ENCODE measurements at regions of chr3 and their contacts with region 1.

Region 1: GRCh38 chr3:120780977-120781376 is 38.4 kb downstream of the GTF2E1 start:
- DNase-seq: peak; percentile 40
- CTCF ChIP-seq: no peak

Region 2: GRCh38 chr3:120763601-120764000 is 17.4 kb before region 1 on chr3:
- CTCF ChIA-PET with region 1: interaction called, 15 read pairs
- POLR2A ChIA-PET with region 1: no interaction called
- DNase-seq: peak; percentile 22
- CTCF ChIP-seq: no peak

Region 3: GRCh38 chr3:121096662-121097352 is 315.8 kb after region 1 on chr3:
- CTCF ChIA-PET with region 1: no interaction called
- POLR2A ChIA-PET with region 1: no interaction called
- DNase-seq: no peak
- CTCF ChIP-seq: no peak

Measured in GM10248 (cell line).